Naive thymus-derived CD4-positive, alpha-beta T cell (primary cell): ENCODE measurements at regions of chr9 and their contacts with region 1.

Region 1: GRCh38 chr9:105447814-105448812 is at the start of gene FSD1L:
- DNase-seq: peak; percentile 38 to 86 (median 67)
- ATAC-seq: peak; percentile 94
- H3K4me3 ChIP-seq: peak within 1 kb of the TSS; percentile 81
- H3K4me3 Mint-ChIP-seq: peak within 1 kb of the TSS; percentile 70 to 89 (median 84)
- H3K27ac ChIP-seq: peak within 1 kb of the TSS; percentile 43
- H3K27ac Mint-ChIP-seq: peak within 1 kb of the TSS in 4 of 9 donors; percentile 34 to 80 (median 46)
- H3K4me1 ChIP-seq: peaks cover 3 to 5% of the 10 kb centered on the region in 2 donors
- H3K4me1 Mint-ChIP-seq: peaks cover 0 to 35% (median 9%) of the 10 kb centered on the region in 7 donors
- H3K27me3 ChIP-seq: no peaks in the 10 kb centered on the region
- H3K27me3 Mint-ChIP-seq: peaks cover 0 to 8% (median 3%) of the 10 kb centered on the region in 5 donors
- total RNA-seq, gene FSD1L: 0.38 to 5.8 (median 0.61) TPM

Region 2: GRCh38 chr9:104968025-104968982 is 479.8 kb before region 1 on chr9:
- CTCF ChIA-PET with region 1: no interaction called
- POLR2A ChIA-PET with region 1: no interaction called
- intact Hi-C with region 1: loop called in 1 of 2 experiments (anchors 1 kb)
- DNase-seq: peak; percentile 80 to 95 (median 91)
- ATAC-seq: peak; percentile 99
- H3K4me3 ChIP-seq: peak overlapping the region; percentile 85
- H3K4me3 Mint-ChIP-seq: peak overlapping the region; percentile 82 to 96 (median 94)
- H3K27ac ChIP-seq: peak overlapping the region; percentile 69
- H3K27ac Mint-ChIP-seq: peak overlapping the region; percentile 64 to 92 (median 86)
- H3K4me1 ChIP-seq: peaks cover 0 to 6% of the 10 kb centered on the region in 2 donors
- H3K4me1 Mint-ChIP-seq: peaks cover 12 to 25% (median 17%) of the 10 kb centered on the region in 7 donors
- H3K27me3 ChIP-seq: peaks cover 0 to 4% of the 10 kb centered on the region in 2 donors
- H3K27me3 Mint-ChIP-seq: peaks cover 0 to 30% (median 0%) of the 10 kb centered on the region in 5 donors

Region 3: GRCh38 chr9:105296889-105297288 is 151.2 kb before region 1 on chr9:
- CTCF ChIA-PET with region 1: no interaction called
- POLR2A ChIA-PET with region 1: no interaction called
- intact Hi-C with region 1: no loop called
- DNase-seq: no peak
- ATAC-seq: no peak
- H3K4me3 ChIP-seq: no peak overlapping the region
- H3K4me3 Mint-ChIP-seq: no peak overlapping the region
- H3K27ac ChIP-seq: no peak overlapping the region
- H3K27ac Mint-ChIP-seq: no peak overlapping the region
- H3K4me1 ChIP-seq: peaks cover 0 to 4% of the 10 kb centered on the region in 2 donors
- H3K4me1 Mint-ChIP-seq: peaks cover 13 to 24% (median 22%) of the 10 kb centered on the region in 7 donors
- H3K27me3 ChIP-seq: no peaks in the 10 kb centered on the region
- H3K27me3 Mint-ChIP-seq: peaks cover 0 to 3% (median 0%) of the 10 kb centered on the region in 5 donors

Region 4: GRCh38 chr9:105405514-105406131 is 42.5 kb before region 1 on chr9:
- CTCF ChIA-PET with region 1: no interaction called
- POLR2A ChIA-PET with region 1: no interaction called
- intact Hi-C with region 1: loop called in 1 of 2 experiments (anchors 1 kb)
- DNase-seq: peak in 8 of 9 donors; percentile 61 to 92 (median 90)
- ATAC-seq: peak; percentile 94
- H3K4me3 ChIP-seq: peak overlapping the region; percentile 1
- H3K4me3 Mint-ChIP-seq: peak overlapping the region in 9 of 10 donors; percentile 63 to 84 (median 75)
- H3K27ac ChIP-seq: no peak overlapping the region
- H3K27ac Mint-ChIP-seq: peak overlapping the region in 8 of 9 donors; percentile 11 to 96 (median 90)
- H3K4me1 ChIP-seq: peaks cover 19 to 22% of the 10 kb centered on the region in 2 donors
- H3K4me1 Mint-ChIP-seq: peaks cover 20 to 42% (median 34%) of the 10 kb centered on the region in 7 donors
- H3K27me3 ChIP-seq: peaks cover 0 to 6% of the 10 kb centered on the region in 2 donors
- H3K27me3 Mint-ChIP-seq: peaks cover 34 to 82% (median 59%) of the 10 kb centered on the region in 5 donors

Region 5: DNA sequence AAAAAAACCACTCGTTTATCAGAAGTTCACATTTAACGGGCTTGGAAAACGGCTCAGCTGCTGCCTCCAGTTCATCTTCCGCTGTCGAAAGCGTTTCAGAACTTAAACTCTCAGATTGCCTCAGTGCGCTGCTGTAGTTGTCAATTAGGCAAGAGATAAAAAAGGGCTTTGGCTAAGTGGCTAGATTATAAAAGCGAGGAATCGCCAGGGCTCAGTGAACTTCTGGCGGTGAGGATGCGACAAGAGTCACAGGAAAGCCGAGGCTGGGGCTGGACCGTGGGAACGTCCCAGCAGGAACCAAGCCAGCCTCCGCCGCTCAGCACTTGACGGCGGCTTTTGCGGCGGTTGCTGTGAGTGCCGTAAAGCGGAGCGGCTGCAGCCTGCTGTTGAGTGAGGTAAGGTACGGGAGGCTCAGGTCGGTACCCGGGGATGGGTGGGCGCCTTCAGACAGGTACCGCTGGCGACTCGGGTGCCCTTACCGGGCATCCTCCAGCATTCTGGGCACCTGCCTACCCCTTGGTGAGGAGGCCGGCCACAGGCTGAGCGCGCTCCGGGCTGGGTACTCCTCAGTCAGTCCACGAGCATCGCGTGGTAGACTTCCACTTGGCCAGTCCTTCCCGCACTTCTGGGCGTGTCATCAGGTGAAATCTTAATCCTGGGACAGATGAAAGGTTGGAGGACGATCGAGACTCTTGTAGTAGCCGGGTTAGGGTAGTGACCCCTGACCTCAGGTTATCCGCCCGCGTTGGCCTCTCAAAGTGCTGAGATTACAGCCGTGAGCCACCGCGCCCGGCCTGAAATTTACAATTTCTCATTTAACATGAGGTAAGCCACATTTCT is 109.9 kb after region 1 on chr9 and contains the start of gene FKTN:
- CTCF ChIA-PET with region 1: no interaction called
- POLR2A ChIA-PET with region 1: no interaction called
- intact Hi-C with region 1: loop called (anchors 1 to 5 kb)
- DNase-seq: peak; percentile 58 to 85 (median 83)
- ATAC-seq: peak; percentile 98
- H3K4me3 ChIP-seq: peak within 1 kb of the TSS; percentile 95
- H3K4me3 Mint-ChIP-seq: peak within 1 kb of the TSS; percentile 90 to 96 (median 94)
- H3K27ac ChIP-seq: peak within 1 kb of the TSS; percentile 61
- H3K27ac Mint-ChIP-seq: peak within 1 kb of the TSS; percentile 66 to 92 (median 86)
- H3K4me1 ChIP-seq: peaks cover 0 to 6% of the 10 kb centered on the region in 2 donors
- H3K4me1 Mint-ChIP-seq: peaks cover 11 to 37% (median 20%) of the 10 kb centered on the region in 7 donors
- H3K27me3 ChIP-seq: no peaks in the 10 kb centered on the region
- H3K27me3 Mint-ChIP-seq: no peaks in the 10 kb centered on the region
- total RNA-seq, gene FKTN: 8.0 to 15.5 (median 10.8) TPM